HCT116 (cell line): ENCODE measurements at regions of chr1 and their contacts with region 1.

Region 1: GRCh38 chr1:22416555-22417454 is 34.8 kb upstream of the ZBTB40 start:
- DNase-seq: peak; percentile 61
- ATAC-seq: peak; percentile 78
- H3K4me3 ChIP-seq: no peak overlapping the region
- H3K27ac ChIP-seq: no peak overlapping the region
- H3K4me1 ChIP-seq: peaks cover 16 to 38% of the 10 kb centered on the region in 2 experiments
- H3K27me3 ChIP-seq: no peaks in the 10 kb centered on the region
- CTCF ChIP-seq: peak; percentile 88 to 97 (median 96)
- POLR2A ChIP-seq: no peak
- RAD21 ChIP-seq: peak; percentile 98

Region 2: GRCh38 chr1:21703318-21703963 is 713.4 kb before region 1 on chr1:
- CTCF ChIA-PET with region 1: no interaction called
- POLR2A ChIA-PET with region 1: no interaction called
- RAD21 ChIA-PET with region 1: no interaction called
- intact Hi-C with region 1: loop called (anchors 2 kb)
- DNase-seq: peak; percentile 26
- ATAC-seq: peak; percentile 87
- H3K4me3 ChIP-seq: no peak overlapping the region
- H3K27ac ChIP-seq: peak overlapping the region; percentile 25; the same call in 1 of the 2 replicates
- H3K4me1 ChIP-seq: no peaks in the 10 kb centered on the region
- H3K27me3 ChIP-seq: no peaks in the 10 kb centered on the region
- CTCF ChIP-seq: peak; percentile 51 to 64 (median 54); a peak in 5 of 6 replicates
- POLR2A ChIP-seq: no peak
- RAD21 ChIP-seq: peak; percentile 61

Region 3: GRCh38 chr1:22105611-22106207 is 311.1 kb before region 1 on chr1:
- CTCF ChIA-PET with region 1: interaction called, 11 read pairs
- POLR2A ChIA-PET with region 1: no interaction called
- RAD21 ChIA-PET with region 1: no interaction called
- intact Hi-C with region 1: loop called (anchors 1 kb)
- DNase-seq: peak; percentile 29
- ATAC-seq: peak; percentile 81
- H3K4me3 ChIP-seq: no peak overlapping the region
- H3K27ac ChIP-seq: no peak overlapping the region
- H3K4me1 ChIP-seq: no peaks in the 10 kb centered on the region
- H3K27me3 ChIP-seq: no peaks in the 10 kb centered on the region
- CTCF ChIP-seq: peak; percentile 42 to 83 (median 82); a peak in 5 of 6 replicates
- POLR2A ChIP-seq: no peak
- RAD21 ChIP-seq: peak; percentile 68

Region 4: GRCh38 chr1:22350171-22350909 is 66.5 kb before region 1 on chr1:
- CTCF ChIA-PET with region 1: no interaction called
- POLR2A ChIA-PET with region 1: no interaction called
- RAD21 ChIA-PET with region 1: no interaction called
- intact Hi-C with region 1: no loop called
- DNase-seq: no peak
- ATAC-seq: no peak
- H3K4me3 ChIP-seq: no peak overlapping the region
- H3K27ac ChIP-seq: no peak overlapping the region
- H3K4me1 ChIP-seq: no peaks in the 10 kb centered on the region
- H3K27me3 ChIP-seq: peaks cover 10% of the 10 kb centered on the region; the same call in 1 of the 2 replicates
- CTCF ChIP-seq: no peak
- POLR2A ChIP-seq: no peak
- RAD21 ChIP-seq: no peak

Region 5: GRCh38 chr1:22641906-22642636 is 225.3 kb after region 1 on chr1:
- CTCF ChIA-PET with region 1: interaction called, 48 read pairs
- POLR2A ChIA-PET with region 1: interaction called, 5 read pairs
- RAD21 ChIA-PET with region 1: interaction called, 7 read pairs
- intact Hi-C with region 1: loop called (anchors 1 kb)
- DNase-seq: no peak
- ATAC-seq: peak; percentile 93
- H3K4me3 ChIP-seq: no peak overlapping the region
- H3K27ac ChIP-seq: no peak overlapping the region
- H3K4me1 ChIP-seq: no peaks in the 10 kb centered on the region
- H3K27me3 ChIP-seq: no peaks in the 10 kb centered on the region
- CTCF ChIP-seq: peak; percentile 87 to 91 (median 89)
- POLR2A ChIP-seq: no peak
- RAD21 ChIP-seq: peak; percentile 97